ENCODE measurements at regions of chr11 and their contacts with region 1.

Region 1: GRCh38 chr11:68257475-68258362 is 14.1 kb downstream of the C11orf24 start:
- DNase-seq: peak; percentile 94
- H3K4me3 Mint-ChIP-seq: no peak overlapping the region
- H3K27ac Mint-ChIP-seq: no peak overlapping the region
- H3K4me1 Mint-ChIP-seq: peaks cover 5% of the 10 kb centered on the region
- H3K27me3 Mint-ChIP-seq: no peaks in the 10 kb centered on the region

Region 2: DNA sequence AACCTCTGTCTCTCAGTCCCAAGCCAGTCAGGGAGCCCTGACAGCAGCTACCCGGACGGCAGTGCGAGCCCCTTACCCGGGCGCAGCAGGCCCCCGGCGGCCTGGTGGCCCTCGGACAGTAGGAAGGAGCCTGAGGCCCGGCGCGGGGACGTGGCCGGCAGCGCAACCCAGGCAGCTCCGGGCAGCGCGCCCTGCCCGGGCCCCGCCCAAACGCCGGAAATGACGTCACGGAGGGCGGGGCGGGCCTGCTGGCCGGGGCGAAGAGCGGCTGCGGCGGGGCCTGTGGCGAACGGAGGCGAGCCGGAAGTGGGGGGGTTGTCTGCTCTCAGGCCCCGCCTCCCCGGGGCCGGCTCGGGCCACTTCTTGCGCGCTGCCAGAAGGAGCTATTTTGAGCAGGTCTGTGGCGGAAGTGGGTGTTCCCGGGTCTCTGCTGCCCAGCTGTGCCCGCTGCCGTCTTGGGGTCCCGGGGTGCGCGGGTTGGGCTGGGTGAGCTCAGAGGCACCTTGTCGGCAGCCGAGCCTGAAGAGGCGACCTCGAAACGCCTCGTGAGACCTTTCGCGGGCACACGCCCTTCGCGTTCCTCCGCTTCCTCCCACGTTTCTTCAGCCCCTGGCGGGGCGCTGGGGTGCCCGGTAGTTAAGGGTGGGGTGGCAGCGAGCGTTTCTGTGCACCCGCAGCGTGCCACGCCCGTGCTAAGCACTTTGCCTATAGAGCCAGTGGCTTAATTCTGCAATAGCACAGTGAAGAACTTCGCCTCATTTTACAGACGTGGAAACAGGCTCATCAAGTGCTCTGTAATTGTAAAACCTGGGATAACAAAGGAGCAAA is 14.3 kb after region 1 on chr11 and contains the start of gene C11orf24:
- CTCF ChIA-PET with region 1: interaction called, 35 read pairs
- POLR2A ChIA-PET with region 1: interaction called, 25 read pairs
- DNase-seq: peak; percentile 94
- H3K4me3 Mint-ChIP-seq: peak within 1 kb of the TSS; percentile 98
- H3K27ac Mint-ChIP-seq: peak within 1 kb of the TSS; percentile 99
- H3K4me1 Mint-ChIP-seq: peaks cover 46% of the 10 kb centered on the region
- H3K27me3 Mint-ChIP-seq: no peaks in the 10 kb centered on the region
- total RNA-seq, gene C11orf24: 24.0 to 27.4 TPM

Region 3: DNA sequence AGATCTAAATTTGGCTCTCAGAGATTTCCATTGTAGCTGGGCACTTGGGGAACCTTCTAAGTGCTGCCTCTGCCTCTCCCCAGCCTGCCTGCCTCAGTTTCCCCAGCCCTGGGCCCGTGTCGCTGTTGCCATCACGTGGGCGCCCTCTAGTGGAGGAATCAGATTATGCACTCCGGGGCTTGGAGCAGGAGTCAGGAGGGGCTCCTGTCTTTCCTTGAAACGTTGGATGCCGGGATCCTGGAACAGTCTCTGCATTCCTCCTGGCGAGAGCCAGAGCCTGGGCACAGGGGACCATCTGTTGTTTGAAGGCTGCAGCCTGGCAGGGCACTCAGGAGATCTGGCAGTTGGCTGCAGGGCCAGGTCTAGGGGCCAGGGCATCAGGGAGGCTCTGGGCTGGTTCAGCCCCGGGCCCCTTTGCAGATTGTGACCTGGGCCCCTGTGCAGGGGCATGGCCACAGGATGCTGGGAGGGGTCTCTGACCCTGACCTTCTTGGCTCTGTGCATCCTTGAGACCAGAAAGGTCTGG is 126.3 kb after region 1 on chr11:
- CTCF ChIA-PET with region 1: interaction called, 19 read pairs
- POLR2A ChIA-PET with region 1: no interaction called
- DNase-seq: peak; percentile 67
- H3K4me3 Mint-ChIP-seq: no peak overlapping the region
- H3K27ac Mint-ChIP-seq: no peak overlapping the region
- H3K4me1 Mint-ChIP-seq: peaks cover 34% of the 10 kb centered on the region
- H3K27me3 Mint-ChIP-seq: peaks cover 2% of the 10 kb centered on the region